Activated T-helper 2 cell treated with anti-CD3 and anti-CD28 coated beads, Interferon-gamma antibody, Interleukin-2, Interleukin-4, amounts not matched to agents 10 μg/mL and 5 μg/mL and 100 μg/mL, durations not matched to agents 14 hours and 24 hours and 36 hours (primary cell): ENCODE measurements at regions of chr16 and their contacts with region 1.

Region 1: DNA sequence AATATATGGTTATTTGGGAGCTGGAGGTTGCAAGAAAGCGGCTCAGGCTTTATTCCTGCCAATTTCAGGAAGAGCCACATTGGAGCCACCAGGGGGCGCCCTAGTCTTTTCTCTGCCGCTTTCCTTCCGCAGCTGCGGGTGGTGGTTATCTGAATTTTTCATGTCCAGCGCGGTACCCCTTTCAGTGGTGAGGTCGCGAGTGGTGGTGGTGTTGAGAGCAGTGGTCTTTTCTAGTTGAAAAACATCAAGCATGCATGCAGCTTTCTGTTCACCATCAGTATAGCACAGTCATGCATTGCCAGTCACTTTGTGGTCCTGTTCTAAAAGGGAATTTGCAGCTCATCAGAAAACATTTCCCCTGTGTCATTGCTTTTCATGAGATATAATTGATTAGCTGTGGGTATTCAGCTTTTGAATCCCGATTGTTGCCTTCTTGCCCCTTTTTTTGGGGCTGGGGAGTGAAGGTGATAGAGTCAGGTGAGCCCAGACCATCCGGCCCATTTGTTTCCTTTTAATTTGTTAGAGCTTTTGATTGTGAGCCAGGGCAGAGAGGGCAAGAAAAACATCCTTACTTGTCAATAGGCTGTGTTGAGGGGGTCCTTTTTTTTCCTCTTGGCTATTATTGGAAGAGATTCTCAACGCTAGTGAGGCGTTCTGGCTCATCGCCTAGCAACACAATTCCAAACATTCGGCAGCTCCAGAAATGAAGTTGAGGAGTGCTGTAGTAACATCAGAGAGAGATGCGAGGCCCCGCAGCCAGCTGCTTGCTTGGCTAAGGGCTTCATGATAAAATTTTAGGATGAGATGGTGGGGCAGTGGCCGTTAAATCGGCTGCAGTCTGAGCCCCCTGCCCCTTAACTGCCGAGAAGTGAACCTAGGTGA is 119.0 kb downstream of the SNX29 start:
- DNase-seq: peak; percentile 42
- H3K4me3 Mint-ChIP-seq: no peak overlapping the region
- H3K27ac Mint-ChIP-seq: no peak overlapping the region
- H3K4me1 Mint-ChIP-seq: peaks cover 5% of the 10 kb centered on the region
- H3K27me3 Mint-ChIP-seq: no peaks in the 10 kb centered on the region

Region 2: DNA sequence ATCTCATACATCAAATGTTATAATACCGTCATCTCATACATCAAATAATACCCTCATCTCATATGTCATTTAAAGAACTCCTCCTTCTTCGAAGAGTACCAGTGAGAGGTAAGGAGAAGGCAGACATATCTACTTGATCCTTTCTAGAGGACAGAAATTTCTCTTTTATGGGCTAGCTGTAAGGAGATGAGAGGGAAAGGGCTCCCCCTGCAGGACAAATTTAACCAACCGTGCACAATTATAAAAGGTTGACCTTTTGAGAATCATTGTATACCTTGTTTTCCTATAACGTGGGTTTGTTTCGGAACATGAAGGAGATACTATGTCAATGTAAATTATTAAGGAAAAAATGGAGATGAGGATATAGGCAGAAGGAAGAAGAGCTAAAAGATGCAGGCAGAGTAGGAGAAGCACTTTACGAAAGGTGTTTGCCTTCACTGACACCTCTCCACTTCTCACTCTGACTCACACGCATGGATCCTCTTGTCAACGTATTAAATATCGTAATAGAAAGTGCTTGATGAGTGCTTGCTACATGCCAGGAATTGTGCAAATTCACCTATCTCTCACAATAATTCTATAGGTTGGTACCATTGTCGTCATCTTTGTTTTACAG is 1358.5 kb after region 1 on chr16:
- intact Hi-C with region 1: loop called (anchors 10 kb)
- DNase-seq: no peak
- H3K4me3 Mint-ChIP-seq: no peak overlapping the region
- H3K27ac Mint-ChIP-seq: no peak overlapping the region
- H3K4me1 Mint-ChIP-seq: no peaks in the 10 kb centered on the region
- H3K27me3 Mint-ChIP-seq: no peaks in the 10 kb centered on the region